Natural killer cell (primary cell): ENCODE measurements at regions of chr14 and their contacts with region 1.

Region 1: GRCh38 chr14:39102969-39103957 is at the start of gene SEC23A:
- DNase-seq: peak; percentile 82 to 88
- ATAC-seq: peak; percentile 97 to 99 (median 98)
- H3K4me3 ChIP-seq: peak within 1 kb of the TSS; percentile 95
- H3K4me3 Mint-ChIP-seq: peak within 1 kb of the TSS; percentile 98
- H3K27ac ChIP-seq: peak within 1 kb of the TSS; percentile 95
- H3K27ac Mint-ChIP-seq: peak within 1 kb of the TSS; percentile 91 to 96
- H3K4me1 ChIP-seq: peaks cover 12% of the 10 kb centered on the region
- H3K4me1 Mint-ChIP-seq: peaks cover 23 to 36% of the 10 kb centered on the region in 2 donors
- H3K27me3 ChIP-seq: no peaks in the 10 kb centered on the region
- H3K27me3 Mint-ChIP-seq: no peaks in the 10 kb centered on the region
- CTCF ChIP-seq: no peak
- total RNA-seq, gene SEC23A: 61.3 to 75.5 (median 67.8) TPM

Region 2: DNA sequence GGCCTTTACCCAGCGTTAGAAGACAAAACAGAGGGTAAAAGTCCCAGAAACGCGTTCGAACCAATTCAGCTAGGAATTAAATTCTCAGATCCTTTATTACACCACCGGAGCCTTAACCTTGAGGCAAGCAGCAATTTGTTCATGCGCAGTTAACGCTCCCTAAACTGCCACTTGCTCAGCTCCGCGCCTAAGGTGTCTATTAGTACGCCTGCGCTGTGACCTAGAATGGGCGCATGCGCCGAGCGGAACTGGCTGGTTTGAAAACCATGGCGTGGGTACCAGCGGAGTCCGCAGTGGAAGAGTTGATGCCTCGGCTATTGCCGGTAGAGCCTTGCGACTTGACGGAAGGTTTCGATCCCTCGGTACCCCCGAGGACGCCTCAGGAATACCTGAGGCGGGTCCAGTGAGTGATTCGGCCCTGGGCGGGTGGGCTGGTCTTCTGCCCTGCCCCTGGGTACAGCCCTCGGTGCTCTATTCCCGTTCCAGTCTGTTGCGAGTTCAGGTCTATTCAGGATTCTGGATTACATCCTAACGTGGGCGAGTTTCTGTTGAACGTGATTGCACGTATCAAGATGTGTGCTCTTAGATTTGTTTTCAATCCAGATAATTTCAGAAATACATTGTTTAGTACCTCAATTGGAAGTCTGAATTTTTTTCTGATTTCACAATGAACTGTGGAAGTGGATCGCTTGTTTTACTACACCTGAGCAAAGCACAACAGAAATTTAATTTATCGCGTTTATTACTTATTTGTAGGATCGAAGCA is 11.0 kb after region 1 on chr14 and contains the start of gene GEMIN2:
- intact Hi-C with region 1: loop called (anchors 1 kb)
- DNase-seq: peak; percentile 91 to 98
- ATAC-seq: peak; percentile 98
- H3K4me3 ChIP-seq: peak within 1 kb of the TSS; percentile 85
- H3K4me3 Mint-ChIP-seq: peak within 1 kb of the TSS; percentile 95
- H3K27ac ChIP-seq: peak within 1 kb of the TSS; percentile 83
- H3K27ac Mint-ChIP-seq: peak within 1 kb of the TSS; percentile 91 to 94
- H3K4me1 ChIP-seq: peaks cover 5% of the 10 kb centered on the region
- H3K4me1 Mint-ChIP-seq: peaks cover 12 to 15% of the 10 kb centered on the region in 2 donors
- H3K27me3 ChIP-seq: no peaks in the 10 kb centered on the region
- H3K27me3 Mint-ChIP-seq: peaks cover 4 to 7% of the 10 kb centered on the region in 2 donors
- CTCF ChIP-seq: no peak
- total RNA-seq, gene GEMIN2: 8.4 to 12.8 (median 10.0) TPM

Region 3: DNA sequence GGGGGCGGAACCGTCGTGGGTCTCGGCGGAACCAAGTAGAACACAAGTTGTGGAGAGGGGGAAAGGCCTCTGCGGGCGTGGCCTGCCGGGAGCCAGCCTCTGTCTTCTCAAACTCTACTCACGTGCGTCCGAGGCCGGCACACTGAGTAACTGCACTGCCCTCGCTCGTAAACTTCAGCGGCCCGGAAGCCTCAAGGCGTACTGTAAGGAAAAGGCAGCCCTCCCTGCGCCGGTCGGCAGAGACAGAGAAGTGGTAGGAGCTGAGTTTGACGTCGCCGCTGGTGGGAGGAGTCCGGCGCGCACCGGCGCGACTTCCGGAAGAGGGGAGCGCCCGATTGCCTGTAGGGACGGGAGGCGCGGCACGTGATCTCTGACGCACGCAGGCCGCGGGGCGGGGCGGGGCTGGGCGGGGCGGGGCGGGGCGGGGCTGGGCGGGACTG is 328.9 kb after region 1 on chr14 and contains the start of gene FBXO33:
- intact Hi-C with region 1: loop called (anchors 5 kb)
- DNase-seq: peak; percentile 96 to 98
- ATAC-seq: peak; percentile 84 to 93 (median 86)
- H3K4me3 ChIP-seq: peak within 1 kb of the TSS; percentile 98
- H3K4me3 Mint-ChIP-seq: peak within 1 kb of the TSS; percentile 100
- H3K27ac ChIP-seq: peak within 1 kb of the TSS; percentile 100
- H3K27ac Mint-ChIP-seq: peak within 1 kb of the TSS; percentile 100
- H3K4me1 ChIP-seq: peaks cover 22% of the 10 kb centered on the region
- H3K4me1 Mint-ChIP-seq: peaks cover 43 to 52% of the 10 kb centered on the region in 2 donors
- H3K27me3 ChIP-seq: no peaks in the 10 kb centered on the region
- H3K27me3 Mint-ChIP-seq: no peaks in the 10 kb centered on the region
- CTCF ChIP-seq: no peak
- total RNA-seq, gene FBXO33: 45.7 to 54.1 (median 50.2) TPM

Region 4: DNA sequence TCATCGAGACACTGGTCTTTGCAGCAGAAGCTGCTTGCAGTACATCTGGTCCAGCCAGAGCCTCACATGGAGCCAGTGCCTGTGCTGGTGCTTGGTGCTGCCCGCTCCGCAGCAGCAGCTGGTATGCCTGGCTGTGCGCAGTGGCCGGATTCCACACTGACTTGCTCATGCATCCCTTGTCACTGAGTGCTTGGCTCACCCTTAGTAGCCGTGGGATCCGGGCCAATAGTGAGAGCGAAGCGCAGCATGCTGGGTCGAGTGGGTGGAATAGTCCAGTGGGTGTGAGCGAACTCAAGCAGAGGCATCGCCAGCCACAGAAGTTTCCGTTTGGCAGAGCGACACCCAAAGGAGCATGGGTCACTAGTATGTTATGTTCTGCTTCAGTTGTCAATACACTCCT is 339.0 kb after region 1 on chr14:
- intact Hi-C with region 1: no loop called
- DNase-seq: no peak
- ATAC-seq: no peak
- H3K4me3 ChIP-seq: no peak overlapping the region
- H3K4me3 Mint-ChIP-seq: no peak overlapping the region
- H3K27ac ChIP-seq: no peak overlapping the region
- H3K27ac Mint-ChIP-seq: no peak overlapping the region
- H3K4me1 ChIP-seq: no peaks in the 10 kb centered on the region
- H3K4me1 Mint-ChIP-seq: no peaks in the 10 kb centered on the region
- H3K27me3 ChIP-seq: no peaks in the 10 kb centered on the region
- H3K27me3 Mint-ChIP-seq: peaks cover 3 to 6% of the 10 kb centered on the region in 2 donors
- CTCF ChIP-seq: no peak